Activated CD4-positive, alpha-beta T cell treated with anti-CD3 and anti-CD28 coated beads for 36 hours (primary cell): ENCODE measurements at regions of chr3 and their contacts with region 1.

Region 1: DNA sequence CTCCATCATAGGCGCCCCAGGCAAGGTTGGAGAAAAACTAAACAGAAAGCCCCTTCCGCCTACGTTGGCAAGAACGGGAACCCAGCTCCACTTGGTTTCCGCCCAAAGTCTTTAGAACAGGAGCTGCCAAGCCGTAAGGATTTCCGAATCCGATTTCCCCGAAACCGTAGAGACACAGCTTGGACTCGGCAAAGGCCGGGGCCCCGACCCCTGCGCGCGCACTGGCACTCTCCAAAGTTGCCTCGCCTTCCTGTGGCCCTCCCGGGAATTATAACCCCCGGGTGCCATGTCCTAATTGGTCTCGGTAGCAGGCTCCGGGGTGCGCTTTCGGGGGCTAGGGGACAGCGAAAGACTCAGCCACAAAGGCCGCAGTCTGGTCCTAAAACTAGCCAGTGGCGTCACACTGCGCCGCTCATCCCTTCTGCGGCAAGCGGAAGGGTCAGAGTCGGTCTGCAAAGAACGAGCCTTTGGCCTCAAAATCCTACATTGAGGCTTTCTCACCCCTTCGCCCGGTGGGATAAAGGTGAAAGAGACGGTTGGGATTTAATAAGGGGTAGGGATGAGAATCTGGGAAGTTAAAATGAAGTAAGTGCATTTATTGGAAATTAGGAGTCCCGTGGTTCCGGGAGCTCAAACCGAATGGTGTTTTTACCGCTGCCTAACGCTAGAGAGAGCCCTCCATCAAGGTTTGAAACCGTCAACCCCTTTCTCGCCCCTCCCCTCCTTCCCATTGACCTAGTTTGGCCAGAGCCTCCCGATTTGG is 6.8 kb downstream of the BCL6 start:
- DNase-seq: peak; percentile 82
- ATAC-seq: peak; percentile 25
- H3K4me3 Mint-ChIP-seq: peak overlapping the region; percentile 91
- H3K27ac Mint-ChIP-seq: peak overlapping the region; percentile 99
- H3K4me1 Mint-ChIP-seq: peaks cover 47% of the 10 kb centered on the region
- H3K27me3 Mint-ChIP-seq: no peaks in the 10 kb centered on the region

Region 2: DNA sequence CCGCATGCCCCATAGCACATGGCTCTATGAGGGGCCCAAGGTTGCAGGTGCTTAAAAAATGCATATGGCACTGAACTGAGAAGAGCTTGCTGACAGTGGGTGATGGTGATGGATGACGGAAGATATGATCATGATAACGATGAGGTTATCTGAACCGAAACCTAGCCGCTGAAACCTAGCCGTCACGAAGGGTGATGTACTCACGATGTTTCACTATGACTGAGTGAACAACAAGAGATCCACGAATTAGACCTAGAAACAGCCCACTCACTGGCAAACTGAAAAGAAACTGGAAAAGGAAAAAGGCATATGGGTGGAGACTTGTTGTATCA is 64.4 kb after region 1 on chr3:
- CTCF ChIA-PET with region 1: interaction called, 19 read pairs
- POLR2A ChIA-PET with region 1: interaction called, 11 read pairs
- intact Hi-C with region 1: loop called in 1 of 2 experiments (anchors 2 kb)
- DNase-seq: peak; percentile 86
- ATAC-seq: peak; percentile 60
- H3K4me3 Mint-ChIP-seq: peak overlapping the region; percentile 34
- H3K27ac Mint-ChIP-seq: peak overlapping the region; percentile 81
- H3K4me1 Mint-ChIP-seq: peaks cover 93% of the 10 kb centered on the region
- H3K27me3 Mint-ChIP-seq: no peaks in the 10 kb centered on the region

Region 3: GRCh38 chr3:188061133-188061532 is 322.6 kb after region 1 on chr3:
- CTCF ChIA-PET with region 1: interaction called, 12 read pairs
- POLR2A ChIA-PET with region 1: interaction called, 4 read pairs
- intact Hi-C with region 1: no loop called
- DNase-seq: peak; percentile 76
- ATAC-seq: peak; percentile 98
- H3K4me3 Mint-ChIP-seq: peak overlapping the region; percentile 25
- H3K27ac Mint-ChIP-seq: peak overlapping the region; percentile 77
- H3K4me1 Mint-ChIP-seq: peaks cover 35% of the 10 kb centered on the region
- H3K27me3 Mint-ChIP-seq: no peaks in the 10 kb centered on the region

Region 4: DNA sequence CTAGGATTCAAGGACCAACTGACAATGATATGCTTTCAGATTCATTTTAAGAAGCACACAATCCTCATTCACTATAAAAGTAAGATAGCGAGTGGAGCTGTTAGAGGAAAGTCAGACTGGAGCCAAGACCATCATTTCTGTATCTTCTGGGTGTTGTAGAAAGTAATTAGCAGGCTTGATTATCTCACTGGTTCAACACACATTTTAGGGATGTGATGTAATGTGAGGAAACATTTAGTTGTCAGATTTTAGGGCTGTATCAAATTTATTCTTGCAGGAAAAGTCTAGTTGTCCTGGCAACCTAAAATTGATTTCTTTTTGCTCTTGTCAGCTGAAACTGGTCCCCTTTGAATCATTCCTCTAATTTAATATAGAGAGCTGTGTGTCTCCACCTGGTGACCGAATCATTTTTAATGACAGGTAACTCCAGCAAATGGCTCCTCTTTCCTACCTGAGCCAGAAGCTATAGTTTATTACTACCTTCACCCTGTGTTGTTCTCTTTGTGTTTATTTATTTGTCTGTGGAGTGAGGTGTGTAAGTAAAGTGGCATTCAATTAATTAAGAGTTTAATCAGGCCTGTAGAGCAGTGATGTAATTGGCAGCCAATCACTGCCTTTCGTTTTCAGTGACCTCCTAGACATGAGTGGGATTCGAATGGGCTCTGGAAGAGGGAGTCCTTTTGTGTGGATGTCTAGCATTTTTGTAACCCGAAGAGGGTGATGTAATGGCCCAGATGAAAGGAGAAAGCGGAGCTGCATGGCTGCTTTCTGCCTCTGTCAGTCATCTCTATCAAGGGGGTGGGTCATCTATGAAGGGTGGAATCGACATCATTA is 541.2 kb after region 1 on chr3:
- CTCF ChIA-PET with region 1: interaction called, 58 read pairs
- POLR2A ChIA-PET with region 1: interaction called, 29 read pairs
- intact Hi-C with region 1: loop called (anchors 1 kb)
- DNase-seq: no peak
- ATAC-seq: peak; percentile 14
- H3K4me3 Mint-ChIP-seq: no peak overlapping the region
- H3K27ac Mint-ChIP-seq: peak overlapping the region; percentile 5
- H3K4me1 Mint-ChIP-seq: peaks cover 33% of the 10 kb centered on the region
- H3K27me3 Mint-ChIP-seq: no peaks in the 10 kb centered on the region

Region 5: DNA sequence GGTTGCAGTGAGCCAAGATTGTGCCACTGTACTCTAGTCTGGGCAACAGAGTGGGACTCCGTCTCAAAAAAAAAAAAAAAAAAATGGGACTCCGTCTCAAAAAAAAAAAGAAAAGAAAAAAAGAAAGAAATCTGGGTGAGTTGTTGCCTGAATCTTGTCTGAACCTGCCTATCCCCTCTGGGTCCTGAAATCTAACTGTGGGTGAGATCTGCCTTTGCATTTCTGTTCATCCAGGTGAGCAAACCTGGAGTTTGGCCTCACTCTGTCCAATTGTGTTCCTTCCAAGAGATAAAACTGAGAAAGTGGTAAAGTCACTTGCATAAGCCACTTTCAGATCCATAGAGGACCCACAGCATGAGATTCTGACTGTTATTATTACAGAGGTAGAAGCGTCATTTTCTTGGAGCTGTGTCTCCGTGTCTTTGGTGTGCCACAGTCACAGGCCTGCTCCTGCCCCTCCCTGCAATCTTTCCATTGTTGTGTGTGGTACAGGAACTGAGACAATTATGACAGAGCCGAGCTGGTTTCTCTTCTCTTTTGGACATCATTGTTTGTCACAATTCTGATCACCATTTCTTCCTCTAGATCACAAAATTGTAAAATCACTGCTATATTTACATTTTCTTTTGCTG is 651.3 kb after region 1 on chr3:
- CTCF ChIA-PET with region 1: no interaction called
- POLR2A ChIA-PET with region 1: interaction called, 4 read pairs
- intact Hi-C with region 1: loop called in 1 of 2 experiments (anchors 2 kb)
- DNase-seq: peak; percentile 81
- ATAC-seq: peak; percentile 92
- H3K4me3 Mint-ChIP-seq: peak overlapping the region; percentile 22
- H3K27ac Mint-ChIP-seq: peak overlapping the region; percentile 78
- H3K4me1 Mint-ChIP-seq: peaks cover 41% of the 10 kb centered on the region
- H3K27me3 Mint-ChIP-seq: no peaks in the 10 kb centered on the region

Region 6: DNA sequence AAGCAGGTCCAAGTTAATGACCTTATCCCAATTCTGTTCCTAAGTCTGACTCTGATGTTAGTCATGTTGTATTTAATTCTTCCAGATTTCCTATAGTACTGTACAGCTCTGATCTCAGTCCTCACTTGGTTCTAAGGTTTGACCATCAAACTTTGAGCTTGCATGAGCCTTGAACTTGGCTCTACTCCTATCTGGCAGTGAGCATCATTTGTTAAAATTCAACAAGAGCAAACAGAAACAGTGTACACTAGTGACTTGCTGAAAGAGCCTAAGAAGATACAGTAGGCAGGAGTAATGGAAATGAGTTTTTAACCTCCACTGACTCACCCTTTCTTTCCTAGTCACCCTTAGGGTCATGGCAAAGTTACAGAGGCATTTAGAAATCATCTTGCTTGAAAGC is 982.1 kb after region 1 on chr3:
- CTCF ChIA-PET with region 1: no interaction called
- POLR2A ChIA-PET with region 1: no interaction called
- intact Hi-C with region 1: loop called in 1 of 2 experiments (anchors 1 kb)
- DNase-seq: no peak
- ATAC-seq: peak; percentile 83
- H3K4me3 Mint-ChIP-seq: no peak overlapping the region
- H3K27ac Mint-ChIP-seq: no peak overlapping the region
- H3K4me1 Mint-ChIP-seq: peaks cover 37% of the 10 kb centered on the region
- H3K27me3 Mint-ChIP-seq: peaks cover 9% of the 10 kb centered on the region

Region 7: GRCh38 chr3:188914552-188914951 is 1176.0 kb after region 1 on chr3:
- CTCF ChIA-PET with region 1: interaction called, 18 read pairs
- POLR2A ChIA-PET with region 1: interaction called, 13 read pairs
- intact Hi-C with region 1: loop called in 1 of 2 experiments (anchors 1 kb)
- DNase-seq: peak; percentile 42
- ATAC-seq: peak; percentile 82
- H3K4me3 Mint-ChIP-seq: no peak overlapping the region
- H3K27ac Mint-ChIP-seq: peak overlapping the region; percentile 90
- H3K4me1 Mint-ChIP-seq: peaks cover 46% of the 10 kb centered on the region
- H3K27me3 Mint-ChIP-seq: peaks cover 3% of the 10 kb centered on the region